ENCODE measurements at regions of chr6 and their contacts with region 1.

Region 1: DNA sequence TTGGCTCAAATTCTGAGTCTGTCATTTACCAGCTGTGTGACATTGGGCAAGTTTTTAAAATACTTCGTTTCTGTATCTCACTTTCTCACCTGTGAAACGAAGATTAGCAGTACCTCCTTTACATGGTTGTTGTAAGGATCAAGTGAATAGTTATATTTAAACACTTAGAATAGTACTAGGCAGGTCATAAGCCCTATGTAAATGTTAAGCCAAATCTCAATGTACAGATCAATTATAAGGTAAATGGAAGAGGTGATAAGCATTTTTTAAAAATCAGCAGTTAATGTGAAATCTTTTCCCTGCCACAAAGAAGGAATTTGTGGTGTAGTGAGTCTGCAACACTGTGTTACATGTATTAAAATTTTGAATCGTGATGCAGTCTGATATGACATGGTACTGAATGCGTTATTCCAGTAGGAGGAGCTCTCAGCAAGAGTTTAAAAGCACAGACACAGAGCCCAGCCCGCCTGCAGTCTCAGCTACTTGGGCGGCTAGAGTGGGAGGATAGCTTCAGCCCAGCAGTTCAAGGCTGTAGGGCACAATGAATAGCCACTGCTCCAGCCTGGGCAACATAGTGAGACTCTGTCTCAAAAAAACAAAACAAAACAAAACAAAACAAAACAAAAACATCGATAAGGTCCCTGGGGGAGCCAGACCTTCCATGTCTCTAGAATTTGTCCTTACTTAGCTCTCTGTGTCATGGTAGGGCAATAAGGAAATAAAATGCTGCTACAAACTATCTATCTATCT is 46.0 kb downstream of the GTF2H5 start:
- ATAC-seq: peak; percentile 48 to 99 (median 77)
- H3K4me3 ChIP-seq: no peak overlapping the region
- H3K27ac ChIP-seq: no peak overlapping the region
- H3K4me1 ChIP-seq: no peaks in the 10 kb centered on the region

Region 2: DNA sequence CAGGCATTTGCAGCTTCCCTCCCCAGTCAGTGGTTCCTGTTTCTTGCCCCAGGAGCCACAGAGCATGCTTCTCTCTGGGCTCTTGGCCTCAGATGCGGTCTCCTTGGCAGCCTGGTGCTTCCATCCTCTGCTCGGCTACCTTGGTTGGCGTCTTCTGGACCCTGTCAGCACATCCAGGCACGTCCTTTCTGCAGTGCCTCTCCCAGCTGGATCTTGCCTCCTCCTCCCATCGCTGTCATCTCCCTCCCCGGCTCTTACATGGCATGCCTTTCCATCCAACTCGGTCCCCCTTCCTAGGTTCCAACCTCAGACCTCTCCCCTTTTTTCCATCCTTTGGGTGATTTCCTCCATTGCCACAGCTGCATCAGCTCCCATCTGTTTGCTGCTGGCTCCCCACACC is 221.2 kb after region 1 on chr6:
- in situ Hi-C with region 1: no loop called
- ATAC-seq: no peak
- H3K4me3 ChIP-seq: no peak overlapping the region
- H3K27ac ChIP-seq: no peak overlapping the region
- H3K4me1 ChIP-seq: no peaks in the 10 kb centered on the region

Region 3: GRCh38 chr6:158488065-158488464 is 274.0 kb after region 1 on chr6:
- in situ Hi-C with region 1: no loop called
- ATAC-seq: peak in 6 of 8 experiments; percentile 22 to 100 (median 76)
- H3K4me3 ChIP-seq: no peak overlapping the region
- H3K27ac ChIP-seq: no peak overlapping the region
- H3K4me1 ChIP-seq: no peaks in the 10 kb centered on the region

Region 4: DNA sequence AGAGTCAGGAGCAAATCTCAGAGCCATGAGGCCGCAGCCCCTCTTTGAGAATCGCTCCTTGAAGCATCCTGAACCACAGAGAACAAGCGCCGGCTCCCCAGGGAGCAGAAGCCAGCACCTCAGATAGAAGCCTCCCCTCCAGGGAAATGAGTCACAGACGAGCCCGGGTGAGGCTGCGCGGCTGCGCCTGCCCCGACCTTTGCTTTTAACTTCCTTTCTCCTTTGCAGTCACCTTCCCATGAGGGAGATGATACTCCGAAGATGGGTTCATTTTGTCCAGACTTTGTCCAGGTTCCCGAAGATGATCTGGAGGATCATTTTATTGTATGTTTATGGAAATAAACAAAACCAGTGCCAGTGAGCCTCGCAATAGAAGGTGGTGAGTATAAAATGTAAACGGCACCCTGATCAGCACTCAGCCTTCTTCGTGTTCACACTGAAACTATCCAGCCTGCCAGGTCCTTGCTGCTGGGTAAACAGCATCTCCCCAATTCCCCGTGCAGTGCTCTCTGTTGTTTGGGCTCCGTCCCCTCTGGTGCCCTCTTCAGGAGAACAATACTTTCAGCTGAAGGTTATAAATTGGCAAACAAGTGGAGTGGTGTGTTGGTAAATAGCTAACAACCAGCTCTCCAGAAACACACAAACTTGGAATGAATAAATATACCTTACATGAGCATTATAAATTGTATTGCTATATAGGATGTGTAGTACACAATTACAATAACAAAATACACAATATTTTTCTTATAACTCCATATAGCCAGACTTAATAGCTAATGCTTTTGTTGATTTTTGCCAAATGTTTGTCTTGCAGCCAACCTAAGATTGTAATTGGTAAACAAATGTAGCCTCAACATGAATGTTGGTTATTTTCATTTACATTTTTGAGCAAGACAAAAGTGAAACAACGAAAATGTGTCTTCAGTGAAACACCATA is 304.4 kb after region 1 on chr6:
- in situ Hi-C with region 1: loop called in 1 of 9 experiments (anchors 25 kb)
- ATAC-seq: peak; percentile 83 to 95 (median 91)
- H3K4me3 ChIP-seq: peak overlapping the region in 4 of 5 donors; percentile 12 to 30 (median 20)
- H3K27ac ChIP-seq: no peak overlapping the region
- H3K4me1 ChIP-seq: peaks cover 5 to 7% of the 10 kb centered on the region in 2 donors

Region 5: GRCh38 chr6:158605266-158605878 is 391.3 kb after region 1 on chr6:
- in situ Hi-C with region 1: loop called in 1 of 9 experiments (anchors 10 kb)
- ATAC-seq: peak in 7 of 8 experiments; percentile 42 to 74 (median 61)
- H3K4me3 ChIP-seq: no peak overlapping the region
- H3K27ac ChIP-seq: no peak overlapping the region
- H3K4me1 ChIP-seq: no peaks in the 10 kb centered on the region

Region 6: GRCh38 chr6:158686791-158687381 is 472.8 kb after region 1 on chr6:
- in situ Hi-C with region 1: loop called in 3 of 9 experiments (anchors 25 kb)
- ATAC-seq: no peak
- H3K4me3 ChIP-seq: no peak overlapping the region
- H3K27ac ChIP-seq: no peak overlapping the region
- H3K4me1 ChIP-seq: no peaks in the 10 kb centered on the region

Region 7: DNA sequence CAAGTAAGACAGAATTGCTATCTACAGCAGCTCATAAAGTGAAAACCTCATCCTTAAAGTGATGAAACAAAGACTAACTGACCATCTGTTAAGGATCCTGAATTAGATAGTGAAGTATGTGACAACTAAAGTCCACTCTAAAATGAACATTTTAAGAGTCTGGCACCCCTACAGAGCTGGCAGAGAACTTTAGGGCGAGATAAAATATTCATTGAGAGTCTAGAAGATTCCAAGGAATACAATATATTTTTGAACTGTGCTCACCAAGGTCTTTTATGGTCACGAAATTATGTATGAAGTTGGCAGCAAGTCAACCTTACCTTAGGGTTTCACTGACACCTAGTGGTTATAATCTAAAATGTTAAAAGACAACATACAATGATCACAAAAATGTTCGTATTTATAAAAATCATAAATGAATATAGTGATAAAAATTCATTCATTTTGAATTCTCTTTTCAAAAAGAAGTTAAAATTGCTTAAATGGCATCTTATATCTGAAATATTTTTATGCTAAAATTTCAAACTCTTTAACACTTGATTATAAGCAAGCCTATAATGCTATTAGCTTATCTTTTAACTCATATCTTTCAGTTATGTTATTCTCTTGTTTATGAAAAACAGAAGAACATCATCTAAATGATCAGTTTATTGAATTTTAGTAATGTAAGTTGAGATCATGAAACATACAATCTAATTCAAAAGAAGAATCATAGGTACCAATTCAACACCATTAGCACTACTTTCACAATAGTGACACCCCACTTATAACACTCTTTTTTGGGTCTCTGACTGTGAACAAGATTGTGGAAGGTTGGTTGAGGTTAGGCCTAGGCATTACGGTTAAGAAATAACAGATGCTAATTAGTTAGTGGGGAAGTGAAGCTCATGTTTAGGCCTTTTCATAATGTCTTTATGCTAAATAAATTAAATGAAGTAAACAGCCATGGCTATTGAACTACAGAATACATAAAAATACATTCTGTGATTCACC is 758.4 kb after region 1 on chr6:
- in situ Hi-C with region 1: loop called in 1 of 9 experiments (anchors 25 kb)
- ATAC-seq: peak in 5 of 8 experiments; percentile 25 to 59 (median 42)
- H3K4me3 ChIP-seq: no peak overlapping the region
- H3K27ac ChIP-seq: no peak overlapping the region
- H3K4me1 ChIP-seq: no peaks in the 10 kb centered on the region

Measured in motor neuron (in vitro differentiated cells).